AG04450 (cell line): ENCODE measurements at regions of chr13 and their contacts with region 1.

Region 1: GRCh38 chr13:20924758-20925394 is 22.3 kb upstream of the XPO4 start:
- DNase-seq: peak; percentile 70
- H3K4me3 ChIP-seq: no peak overlapping the region
- H3K27ac ChIP-seq: no peak overlapping the region
- H3K27me3 ChIP-seq: no peaks in the 10 kb centered on the region
- CTCF ChIP-seq: peak; percentile 86

Region 2: GRCh38 chr13:20495082-20496023 is 429.5 kb before region 1 on chr13:
- CTCF ChIA-PET with region 1: interaction called, 22 read pairs
- POLR2A ChIA-PET with region 1: no interaction called
- DNase-seq: peak; percentile 39
- H3K4me3 ChIP-seq: peak overlapping the region; percentile 25
- H3K27ac ChIP-seq: peak overlapping the region; percentile 65
- H3K27me3 ChIP-seq: no peaks in the 10 kb centered on the region
- CTCF ChIP-seq: peak; percentile 97

Region 3: DNA sequence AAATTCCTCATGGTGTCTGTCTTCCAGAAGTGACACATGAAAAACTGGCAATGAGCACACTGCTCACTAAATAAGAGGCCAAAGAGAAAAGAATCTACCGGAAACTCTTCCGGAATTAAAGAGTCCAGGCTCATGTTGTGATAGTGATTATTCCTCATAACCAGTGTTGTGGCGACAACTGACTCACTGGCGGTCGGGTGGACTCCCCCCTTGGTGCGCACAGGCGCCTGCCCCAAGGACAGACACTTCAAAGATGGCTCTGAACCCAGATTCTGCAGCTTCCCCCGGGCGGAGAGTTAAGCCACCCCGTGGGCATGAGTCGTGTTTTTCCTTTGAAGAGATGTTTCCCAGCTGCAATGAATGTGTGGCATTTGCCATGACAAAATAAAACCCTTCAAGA is 211.1 kb before region 1 on chr13:
- CTCF ChIA-PET with region 1: interaction called, 10 read pairs
- POLR2A ChIA-PET with region 1: no interaction called
- DNase-seq: no peak
- H3K4me3 ChIP-seq: no peak overlapping the region
- H3K27ac ChIP-seq: peak overlapping the region; percentile 12
- H3K27me3 ChIP-seq: peaks cover 2% of the 10 kb centered on the region
- CTCF ChIP-seq: no peak

Region 4: GRCh38 chr13:21033212-21033840 is 108.5 kb after region 1 on chr13:
- CTCF ChIA-PET with region 1: no interaction called
- POLR2A ChIA-PET with region 1: no interaction called
- DNase-seq: no peak
- H3K4me3 ChIP-seq: no peak overlapping the region
- H3K27ac ChIP-seq: peak overlapping the region; percentile 41
- H3K27me3 ChIP-seq: no peaks in the 10 kb centered on the region
- CTCF ChIP-seq: no peak